BJ (cell line): ENCODE measurements at regions of chr1 and their contacts with region 1.

Region 1: DNA sequence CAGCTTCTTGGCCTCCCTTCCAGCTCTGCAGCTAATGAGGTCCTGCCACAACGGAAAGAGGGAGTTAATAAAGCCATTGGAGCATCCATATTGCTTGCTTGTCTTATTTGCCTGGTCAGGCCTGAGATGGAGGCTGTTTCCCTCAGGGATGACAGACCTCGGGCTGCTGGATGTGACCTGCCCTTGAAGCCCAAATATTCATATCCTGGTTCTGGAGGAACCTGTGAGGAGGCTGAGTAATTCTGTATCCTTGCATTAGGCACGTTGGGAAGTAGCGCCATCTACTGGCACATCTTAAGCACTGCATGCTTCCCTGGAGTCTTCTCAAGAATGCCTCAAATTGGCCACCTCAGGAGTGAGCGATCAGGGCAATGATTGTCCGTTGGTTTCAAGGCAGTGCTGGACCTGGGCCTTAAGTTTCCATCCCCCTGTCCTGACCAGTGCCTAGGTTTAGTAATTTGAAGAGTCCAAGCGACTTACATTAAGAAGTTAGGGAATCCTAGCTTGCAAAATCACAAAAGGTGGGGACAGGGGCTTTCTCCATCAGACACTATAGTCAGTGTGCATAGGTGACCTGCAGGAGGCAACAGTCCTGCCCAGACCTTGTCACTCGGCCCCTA is 13.8 kb upstream of the NASP start:
- DNase-seq: peak; percentile 27
- H3K4me3 ChIP-seq: no peak overlapping the region
- H3K27me3 ChIP-seq: no peaks in the 10 kb centered on the region
- CTCF ChIP-seq: peak; percentile 97

Region 2: GRCh38 chr1:45359882-45360513 is 210.1 kb before region 1 on chr1:
- CTCF ChIA-PET with region 1: interaction called, 15 read pairs
- POLR2A ChIA-PET with region 1: no interaction called
- DNase-seq: no peak
- H3K4me3 ChIP-seq: no peak overlapping the region
- H3K27me3 ChIP-seq: no peaks in the 10 kb centered on the region
- CTCF ChIP-seq: peak; percentile 70

Region 3: DNA sequence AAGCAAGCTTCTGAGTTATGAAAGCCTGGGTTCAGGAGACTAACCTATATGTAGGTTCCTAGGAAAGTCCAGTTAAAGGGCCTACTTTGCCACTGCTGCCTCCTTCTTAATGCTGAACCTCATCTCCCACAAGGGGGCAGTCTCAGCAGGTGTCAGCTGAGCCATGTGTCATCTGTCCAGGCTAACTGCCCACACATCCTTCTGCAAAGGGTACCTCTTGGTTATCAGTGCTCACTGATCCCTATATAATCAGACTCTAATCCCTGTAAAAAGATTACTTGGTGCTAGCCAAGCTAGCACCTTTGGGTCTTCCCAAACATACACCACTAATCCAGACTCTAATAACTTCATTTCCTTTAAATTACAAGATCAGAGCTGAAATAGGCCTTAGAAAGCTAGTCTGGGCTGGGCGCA is 57.4 kb before region 1 on chr1:
- CTCF ChIA-PET with region 1: interaction called, 60 read pairs
- POLR2A ChIA-PET with region 1: no interaction called
- DNase-seq: no peak
- H3K4me3 ChIP-seq: no peak overlapping the region
- H3K27me3 ChIP-seq: no peaks in the 10 kb centered on the region
- CTCF ChIP-seq: peak; percentile 75

Region 4: GRCh38 chr1:45521398-45522323 is 48.4 kb before region 1 on chr1 and contains the start of gene PRDX1:
- CTCF ChIA-PET with region 1: interaction called, 32 read pairs
- POLR2A ChIA-PET with region 1: no interaction called
- DNase-seq: peak; percentile 75
- H3K4me3 ChIP-seq: peak within 1 kb of the TSS; percentile 71
- H3K27me3 ChIP-seq: no peaks in the 10 kb centered on the region
- CTCF ChIP-seq: peak; percentile 33; the same call in 1 of the 2 replicates
- polyA plus RNA-seq, gene PRDX1: 414 and 752 TPM in 2 replicates

Region 5: GRCh38 chr1:45557422-45557944 is 12.6 kb before region 1 on chr1:
- CTCF ChIA-PET with region 1: interaction called, 36 read pairs
- POLR2A ChIA-PET with region 1: no interaction called
- DNase-seq: no peak
- H3K4me3 ChIP-seq: no peak overlapping the region
- H3K27me3 ChIP-seq: no peaks in the 10 kb centered on the region
- CTCF ChIP-seq: no peak

Region 6: DNA sequence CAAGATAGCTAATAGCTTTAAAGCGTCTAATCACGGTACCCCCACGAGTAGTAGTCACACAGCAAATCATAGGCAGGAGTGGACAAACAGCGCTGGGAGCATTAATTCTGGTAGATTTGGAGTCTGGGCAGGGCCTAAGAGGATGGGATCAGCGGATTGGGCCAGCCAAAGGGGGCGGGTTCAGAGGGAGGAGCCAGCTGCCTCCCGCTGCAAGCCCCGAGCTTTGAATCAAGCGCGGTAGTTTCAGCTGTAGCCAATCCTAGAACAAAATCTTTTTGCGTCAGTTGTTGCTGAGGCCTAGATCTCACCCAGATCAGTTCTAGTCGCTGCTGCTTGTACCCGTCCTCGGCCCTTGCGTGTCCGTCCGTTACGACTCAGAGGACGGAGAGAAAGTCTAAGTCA is 13.2 kb after region 1 on chr1:
- CTCF ChIA-PET with region 1: interaction called, 66 read pairs
- POLR2A ChIA-PET with region 1: no interaction called
- DNase-seq: peak; percentile 91
- H3K4me3 ChIP-seq: peak overlapping the region; percentile 100
- H3K27me3 ChIP-seq: no peaks in the 10 kb centered on the region
- CTCF ChIP-seq: no peak

Region 7: GRCh38 chr1:45739137-45739536 is 169.1 kb after region 1 on chr1:
- CTCF ChIA-PET with region 1: no interaction called
- POLR2A ChIA-PET with region 1: no interaction called
- DNase-seq: no peak
- H3K4me3 ChIP-seq: no peak overlapping the region
- H3K27me3 ChIP-seq: no peaks in the 10 kb centered on the region
- CTCF ChIP-seq: no peak